ENCODE measurements at regions of chr19 and their contacts with region 1.

Region 1: DNA sequence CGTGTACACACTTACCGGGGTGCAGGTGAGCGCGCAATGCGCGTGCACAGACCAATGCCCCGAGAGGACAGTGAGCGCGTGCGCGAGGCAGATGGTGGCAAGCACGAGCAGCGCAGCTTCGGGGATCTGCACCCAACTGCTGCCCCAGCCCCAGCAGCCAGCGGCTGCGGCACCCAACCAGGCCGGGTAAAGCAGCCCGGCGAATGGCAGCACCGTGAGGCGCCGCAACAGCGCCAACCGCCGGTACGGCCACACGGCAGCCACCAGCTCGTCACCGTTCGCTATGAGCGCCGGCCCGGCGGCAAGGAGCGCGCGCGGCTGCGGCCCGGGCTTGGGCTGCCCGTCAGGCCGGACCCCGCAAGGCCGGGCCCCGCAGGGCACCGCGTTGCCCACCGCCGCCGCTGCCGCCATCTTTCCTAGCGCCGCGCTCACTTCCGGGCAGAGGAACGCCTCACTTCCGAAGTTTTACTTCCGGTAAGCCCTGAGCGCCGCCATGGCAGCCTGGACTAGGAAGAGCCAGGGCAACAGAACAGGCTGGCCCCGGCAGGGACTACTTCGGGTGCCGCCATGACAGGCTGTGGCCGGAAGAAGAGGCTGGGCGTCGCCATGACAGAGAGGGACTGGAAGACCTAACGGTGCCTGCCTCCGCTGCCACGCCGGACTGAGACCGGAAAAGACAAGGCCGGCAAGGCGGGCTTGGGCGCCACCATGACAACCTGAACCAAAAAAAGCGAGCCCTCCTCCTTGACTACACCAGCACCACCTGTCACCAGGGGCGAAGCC is at the start of gene ATP13A1:
- DNase-seq: peak; percentile 97 to 99 (median 99)
- H3K4me3 ChIP-seq: peak within 1 kb of the TSS; percentile 83 to 94 (median 92)
- H3K27ac ChIP-seq: peak within 1 kb of the TSS; percentile 90 to 94
- H3K4me1 ChIP-seq: peaks cover 6 to 36% (median 28%) of the 10 kb centered on the region in 4 experiments
- H3K27me3 ChIP-seq: no peaks in the 10 kb centered on the region

Region 2: GRCh38 chr19:19643158-19644053 is 20.0 kb before region 1 on chr19 and contains the start of gene GMIP:
- CTCF ChIA-PET with region 1: interaction called, 10 read pairs
- POLR2A ChIA-PET with region 1: interaction called, 4 read pairs
- DNase-seq: peak; percentile 58 to 78 (median 75)
- H3K4me3 ChIP-seq: peak within 1 kb of the TSS; percentile 78 to 95 (median 87)
- H3K27ac ChIP-seq: peak within 1 kb of the TSS; percentile 50 to 81
- H3K4me1 ChIP-seq: peaks cover 0 to 19% (median 13%) of the 10 kb centered on the region in 4 experiments
- H3K27me3 ChIP-seq: no peaks in the 10 kb centered on the region

Region 3: DNA sequence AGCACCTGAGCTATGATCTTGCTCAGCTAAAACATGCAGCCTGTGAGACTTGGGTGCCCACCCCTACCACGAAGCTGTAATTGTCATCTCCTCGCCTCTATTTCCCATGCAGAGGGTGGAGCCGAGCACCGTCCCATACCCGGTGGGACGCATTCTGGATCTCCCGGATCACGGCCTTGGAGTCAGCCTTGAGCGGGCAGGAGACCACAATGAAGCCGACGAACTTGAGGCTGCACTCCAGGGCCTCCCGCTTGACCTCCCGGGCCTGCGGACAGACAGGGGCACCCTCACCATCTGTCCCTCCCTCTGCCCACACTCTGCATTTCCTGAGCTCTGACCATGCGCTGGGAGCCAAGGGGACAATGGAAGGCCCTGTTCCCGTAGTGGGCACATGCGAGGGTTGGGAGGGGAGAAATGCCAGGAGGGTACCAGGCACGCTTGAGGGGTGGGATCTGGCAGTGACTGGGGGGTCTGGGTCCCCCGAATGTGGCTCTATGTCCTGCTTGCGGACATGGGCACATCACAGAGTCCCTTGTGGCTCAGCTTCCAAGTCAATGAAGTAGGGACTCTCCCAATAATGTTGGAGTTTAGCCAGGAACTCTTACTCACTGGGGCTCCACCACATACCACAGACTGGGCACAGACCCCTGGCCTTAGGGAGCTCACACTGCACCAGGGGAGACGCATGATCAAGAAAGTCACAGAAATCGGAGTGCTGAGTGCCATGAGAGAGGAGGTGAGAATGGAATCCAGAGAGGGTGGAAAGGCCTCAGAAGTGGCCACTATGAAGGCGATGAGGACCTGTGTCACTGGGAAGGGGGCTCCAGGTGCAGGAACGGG is 10.8 kb before region 1 on chr19:
- CTCF ChIA-PET with region 1: interaction called, 20 read pairs
- POLR2A ChIA-PET with region 1: interaction called, 3 read pairs
- DNase-seq: no peak
- H3K4me3 ChIP-seq: no peak overlapping the region
- H3K27ac ChIP-seq: no peak overlapping the region
- H3K4me1 ChIP-seq: no peaks in the 10 kb centered on the region
- H3K27me3 ChIP-seq: no peaks in the 10 kb centered on the region

Measured in common myeloid progenitor, CD34-positive (primary cell).